Cardiac septum (tissue), 1 donor: ENCODE measurements at regions of chr4 and their contacts with region 1.

Region 1: GRCh38 chr4:38615847-38616246 is 48.2 kb upstream of the KLF3 start:
- DNase-seq: no peak

Region 2: DNA sequence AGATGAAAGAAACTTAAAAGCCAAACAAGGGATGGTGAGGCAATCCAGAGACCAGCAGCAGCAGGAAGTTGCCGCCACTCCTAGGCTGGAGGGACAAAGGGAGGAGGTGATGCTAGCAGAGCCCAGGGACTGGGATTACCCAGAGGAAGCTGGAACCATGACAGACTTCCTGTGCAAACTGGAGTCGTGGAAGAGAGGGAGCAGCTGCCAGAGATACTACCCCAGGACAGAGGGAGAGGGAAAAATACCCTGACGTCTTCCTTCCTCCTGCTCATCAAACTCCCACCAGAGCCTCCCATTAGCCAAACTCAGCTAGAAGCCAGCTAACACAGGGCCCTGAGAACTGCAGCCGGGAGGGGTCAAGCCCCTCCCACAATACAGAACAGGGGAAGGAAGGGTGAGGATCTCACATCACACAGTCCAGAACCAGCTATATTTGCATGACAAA is 53.1 kb before region 1 on chr4:
- intact Hi-C with region 1: loop called (anchors 5 kb)
- DNase-seq: peak; percentile 79